GM13977 (cell line): ENCODE measurements at regions of chr21 and their contacts with region 1.

Region 1: DNA sequence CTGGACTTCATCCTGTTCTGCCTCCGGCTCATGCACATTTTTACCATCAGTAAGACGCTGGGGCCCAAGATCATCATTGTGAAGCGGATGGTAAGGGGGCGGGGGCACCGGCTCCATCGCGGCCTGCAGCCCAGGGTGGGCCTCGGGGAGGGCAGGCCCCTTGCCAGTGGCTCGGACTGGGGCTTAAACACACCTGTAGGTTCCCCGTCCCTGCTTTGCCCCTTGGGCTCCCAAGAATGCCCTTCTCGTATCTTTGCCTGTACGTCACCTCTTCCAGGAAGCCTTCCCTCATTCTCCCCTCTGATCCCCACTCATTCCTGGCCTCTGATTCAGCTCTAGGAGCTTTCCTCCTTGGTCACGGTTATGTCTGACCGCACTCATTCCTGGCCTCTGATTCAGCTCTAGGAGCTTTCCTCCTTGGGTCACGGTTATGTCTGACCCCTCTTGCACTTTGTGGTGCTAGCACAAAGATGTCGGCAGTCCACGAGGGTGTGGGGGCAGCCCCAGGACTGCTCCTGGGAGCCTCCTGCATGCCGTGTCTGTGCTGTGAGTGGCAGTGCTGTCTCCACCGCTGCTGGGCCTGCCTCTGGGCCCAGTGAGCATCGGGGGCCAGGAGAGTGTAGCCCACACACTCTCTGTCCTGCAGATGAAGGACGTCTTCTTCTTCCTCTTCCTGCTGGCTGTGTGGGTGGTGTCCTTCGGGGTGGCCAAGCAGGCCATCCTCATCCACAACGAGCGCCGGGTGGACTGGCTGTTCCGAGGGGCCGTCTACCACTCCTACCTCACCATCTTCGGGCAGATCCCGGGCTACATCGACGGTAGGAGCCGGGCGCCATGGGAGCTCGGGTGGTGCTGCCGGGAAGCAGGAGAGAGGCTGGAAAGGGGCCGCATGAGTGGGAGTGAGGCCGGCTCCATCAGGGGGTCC is 49.1 kb upstream of the LRRC3 start:
- DNase-seq: no peak
- CTCF ChIP-seq: no peak

Region 2: DNA sequence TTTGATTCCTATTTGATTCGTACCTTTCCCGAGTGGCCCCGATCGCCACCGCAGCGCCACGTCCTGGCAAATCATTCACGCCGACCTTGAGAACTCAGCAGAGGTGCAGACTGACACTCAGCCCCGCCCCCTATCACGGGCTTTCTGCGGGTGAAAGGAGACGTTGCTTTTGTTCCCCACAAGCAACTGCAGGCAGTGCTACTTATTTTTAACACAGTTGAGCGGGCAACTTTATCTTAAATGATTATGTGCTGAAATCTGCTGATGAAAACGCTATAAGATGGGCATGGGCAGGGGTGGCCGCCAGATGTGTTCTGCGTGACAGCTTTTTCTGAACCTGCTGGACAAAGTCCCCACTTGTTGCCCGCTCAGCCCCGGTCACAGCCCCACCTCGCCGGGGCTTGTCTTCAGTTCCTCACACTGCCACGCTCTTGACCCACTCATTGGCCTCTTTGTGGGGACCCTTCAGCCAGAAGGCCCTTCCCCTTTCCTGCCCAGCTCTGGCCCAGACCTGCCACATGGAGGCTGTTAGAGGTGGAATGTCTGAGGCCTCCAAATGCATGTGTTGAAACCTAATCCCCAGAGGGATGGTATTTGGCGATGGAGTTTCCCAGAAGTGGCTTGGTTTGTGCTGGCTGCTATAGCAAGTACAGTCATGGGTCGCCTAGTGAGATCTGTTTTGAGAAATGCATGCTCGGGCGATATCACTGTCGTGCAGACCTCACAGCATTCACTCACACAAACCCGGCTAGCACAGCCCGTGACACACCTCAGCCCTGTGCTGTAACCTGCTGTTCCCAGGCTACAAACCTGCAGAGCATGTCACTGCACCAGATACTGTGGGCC is 703.0 kb before region 1 on chr21:
- in situ Hi-C with region 1: no loop called
- DNase-seq: no peak
- CTCF ChIP-seq: no peak

Region 3: DNA sequence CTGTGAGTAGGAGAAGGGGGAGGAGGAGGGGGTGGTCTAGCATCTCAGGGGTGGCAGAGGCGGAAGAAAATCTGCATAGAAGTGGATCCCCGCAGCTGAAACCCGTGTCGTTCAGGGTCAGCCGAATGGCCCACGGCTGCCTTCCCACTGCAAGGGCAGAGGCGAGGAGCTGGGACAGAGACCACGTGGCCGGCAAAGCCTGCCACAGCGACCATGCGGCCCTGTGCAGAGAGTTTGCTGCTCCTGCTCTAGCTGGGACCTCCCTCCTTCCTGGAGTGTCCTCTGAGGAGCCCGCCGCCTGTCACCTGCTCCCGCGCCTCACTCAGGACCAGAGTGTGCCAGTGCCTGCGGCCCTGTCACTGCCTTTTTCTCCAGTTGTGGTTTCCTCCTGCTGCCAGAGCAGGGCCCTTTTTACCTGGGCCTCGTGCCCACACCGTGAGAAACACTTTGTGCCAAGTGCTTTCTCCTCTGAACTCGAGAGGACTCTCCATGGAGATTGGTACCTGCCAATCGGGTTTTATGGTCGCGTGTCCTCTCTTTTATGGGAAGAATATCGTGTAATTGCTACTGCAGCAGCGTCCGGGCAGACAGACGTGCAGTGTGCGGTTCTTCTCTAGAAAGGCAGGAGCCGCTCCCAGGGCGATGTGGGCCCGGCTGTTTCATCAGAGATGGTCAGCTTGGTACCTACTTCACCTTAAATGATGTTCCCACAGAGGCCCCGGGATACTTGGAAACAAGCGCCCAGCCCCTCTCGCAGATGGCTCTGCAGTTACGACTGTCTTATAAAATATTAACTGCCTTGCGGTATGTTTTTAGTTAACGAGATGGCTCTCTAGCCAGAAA is 58.1 kb before region 1 on chr21:
- in situ Hi-C with region 1: loop called (anchors 10 kb)
- DNase-seq: no peak
- CTCF ChIP-seq: no peak

Region 4: GRCh38 chr21:44497703-44498126 is 91.5 kb after region 1 on chr21:
- in situ Hi-C with region 1: no loop called
- DNase-seq: no peak
- CTCF ChIP-seq: no peak

Region 5: GRCh38 chr21:44593598-44594405 is 187.6 kb after region 1 on chr21:
- in situ Hi-C with region 1: no loop called
- DNase-seq: no peak
- CTCF ChIP-seq: no peak